AG04450 (cell line): ENCODE measurements at regions of chr22 and their contacts with region 1.

Region 1: GRCh38 chr22:23178512-23179254 is 1.6 kb upstream of the BCR start:
- DNase-seq: no peak
- H3K4me3 ChIP-seq: no peak overlapping the region
- H3K27ac ChIP-seq: peak overlapping the region; percentile 11
- H3K27me3 ChIP-seq: no peaks in the 10 kb centered on the region
- CTCF ChIP-seq: peak; percentile 99

Region 2: GRCh38 chr22:22877523-22878210 is 301.0 kb before region 1 on chr22:
- CTCF ChIA-PET with region 1: no interaction called
- POLR2A ChIA-PET with region 1: no interaction called
- DNase-seq: peak; percentile 16
- H3K4me3 ChIP-seq: no peak overlapping the region
- H3K27ac ChIP-seq: no peak overlapping the region
- H3K27me3 ChIP-seq: peaks cover 4% of the 10 kb centered on the region
- CTCF ChIP-seq: peak; percentile 71

Region 3: GRCh38 chr22:23270212-23270733 is 91.6 kb after region 1 on chr22:
- CTCF ChIA-PET with region 1: interaction called, 12 read pairs
- POLR2A ChIA-PET with region 1: no interaction called
- DNase-seq: no peak
- H3K4me3 ChIP-seq: no peak overlapping the region
- H3K27ac ChIP-seq: no peak overlapping the region
- H3K27me3 ChIP-seq: no peaks in the 10 kb centered on the region
- CTCF ChIP-seq: peak; percentile 42

Region 4: GRCh38 chr22:23281406-23282088 is 102.9 kb after region 1 on chr22:
- CTCF ChIA-PET with region 1: interaction called, 178 read pairs
- POLR2A ChIA-PET with region 1: interaction called, 7 read pairs
- DNase-seq: peak; percentile 50
- H3K4me3 ChIP-seq: no peak overlapping the region
- H3K27ac ChIP-seq: peak overlapping the region; percentile 52
- H3K27me3 ChIP-seq: no peaks in the 10 kb centered on the region
- CTCF ChIP-seq: peak; percentile 90

Region 5: GRCh38 chr22:23289851-23290724 is 111.4 kb after region 1 on chr22:
- CTCF ChIA-PET with region 1: interaction called, 76 read pairs
- POLR2A ChIA-PET with region 1: no interaction called
- DNase-seq: no peak
- H3K4me3 ChIP-seq: no peak overlapping the region
- H3K27ac ChIP-seq: no peak overlapping the region
- H3K27me3 ChIP-seq: no peaks in the 10 kb centered on the region
- CTCF ChIP-seq: peak; percentile 89